Activated B cell treated with CpG ODN at 0.5 μM for 24 hours (primary cell): ENCODE measurements at regions of chr1 and their contacts with region 1.

Region 1: DNA sequence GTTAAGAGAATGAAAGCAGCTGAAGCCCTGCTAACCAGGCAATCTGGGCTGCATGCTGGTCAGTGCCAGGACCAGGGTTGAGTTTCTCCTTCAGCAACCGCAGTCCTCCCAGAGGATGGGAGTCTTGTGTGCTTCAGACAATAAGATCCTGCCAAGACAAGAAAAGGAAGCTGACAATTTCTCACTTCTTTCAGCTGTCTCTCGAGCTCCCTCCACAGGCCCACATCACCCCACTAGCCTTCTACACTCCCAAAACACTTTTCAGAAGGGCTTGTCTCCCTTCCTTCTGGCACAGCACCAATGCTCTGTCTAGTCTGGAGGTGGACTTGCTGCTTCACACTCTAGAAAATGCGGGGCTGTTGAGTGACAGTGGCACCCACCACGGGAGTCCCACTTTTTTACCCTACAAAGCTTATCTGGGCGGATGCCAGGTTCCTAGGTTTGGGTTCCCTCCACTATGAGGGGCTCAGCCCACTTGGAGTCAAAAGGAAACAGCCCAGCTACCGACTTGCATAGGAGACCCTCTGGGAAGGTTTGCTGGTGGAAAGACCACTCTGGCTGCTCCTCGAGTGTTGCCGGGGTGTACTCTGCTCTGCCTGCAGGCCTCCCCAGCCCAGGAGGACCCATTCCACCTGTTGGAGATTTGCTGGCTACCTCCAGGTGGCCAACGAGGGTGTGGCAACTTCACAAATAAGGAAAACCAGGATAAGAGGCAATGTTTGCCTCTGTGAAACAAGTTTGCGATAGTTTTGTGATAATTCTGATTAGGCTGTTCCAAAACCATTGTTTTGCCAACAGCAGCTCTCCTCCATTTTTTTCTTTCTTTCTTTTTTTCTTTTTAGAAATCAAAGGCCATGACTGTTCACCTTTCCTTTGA is 68.9 kb downstream of the TENT5C start:
- DNase-seq: peak; percentile 41
- ATAC-seq: peak; percentile 80
- H3K4me3 Mint-ChIP-seq: no peak overlapping the region
- H3K27ac Mint-ChIP-seq: no peak overlapping the region
- H3K4me1 Mint-ChIP-seq: peaks cover 56% of the 10 kb centered on the region
- H3K27me3 Mint-ChIP-seq: no peaks in the 10 kb centered on the region
- CTCF ChIP-seq: no peak

Region 2: GRCh38 chr1:117599286-117600221 is 75.2 kb before region 1 on chr1:
- CTCF ChIA-PET with region 1: interaction called, 11 read pairs
- POLR2A ChIA-PET with region 1: interaction called, 1,269 read pairs
- intact Hi-C with region 1: no loop called
- DNase-seq: peak; percentile 4
- ATAC-seq: no peak
- H3K4me3 Mint-ChIP-seq: no peak overlapping the region
- H3K27ac Mint-ChIP-seq: no peak overlapping the region
- H3K4me1 Mint-ChIP-seq: peaks cover 25% of the 10 kb centered on the region
- H3K27me3 Mint-ChIP-seq: no peaks in the 10 kb centered on the region
- CTCF ChIP-seq: no peak

Region 3: GRCh38 chr1:117622726-117623125 is 52.0 kb before region 1 on chr1:
- CTCF ChIA-PET with region 1: interaction called, 11 read pairs
- POLR2A ChIA-PET with region 1: interaction called, 1,269 read pairs
- intact Hi-C with region 1: no loop called
- DNase-seq: no peak
- ATAC-seq: peak; percentile 29
- H3K4me3 Mint-ChIP-seq: no peak overlapping the region
- H3K27ac Mint-ChIP-seq: peak overlapping the region; percentile 71
- H3K4me1 Mint-ChIP-seq: peaks cover 95% of the 10 kb centered on the region
- H3K27me3 Mint-ChIP-seq: no peaks in the 10 kb centered on the region
- CTCF ChIP-seq: no peak

Region 4: GRCh38 chr1:117654493-117655219 is 20.1 kb before region 1 on chr1:
- CTCF ChIA-PET with region 1: interaction called, 25 read pairs
- POLR2A ChIA-PET with region 1: interaction called, 32 read pairs
- intact Hi-C with region 1: loop called (anchors 1 kb)
- DNase-seq: peak; percentile 35
- ATAC-seq: peak; percentile 67
- H3K4me3 Mint-ChIP-seq: peak overlapping the region; percentile 49
- H3K27ac Mint-ChIP-seq: peak overlapping the region; percentile 93
- H3K4me1 Mint-ChIP-seq: peaks cover 92% of the 10 kb centered on the region
- H3K27me3 Mint-ChIP-seq: no peaks in the 10 kb centered on the region
- CTCF ChIP-seq: no peak

Region 5: DNA sequence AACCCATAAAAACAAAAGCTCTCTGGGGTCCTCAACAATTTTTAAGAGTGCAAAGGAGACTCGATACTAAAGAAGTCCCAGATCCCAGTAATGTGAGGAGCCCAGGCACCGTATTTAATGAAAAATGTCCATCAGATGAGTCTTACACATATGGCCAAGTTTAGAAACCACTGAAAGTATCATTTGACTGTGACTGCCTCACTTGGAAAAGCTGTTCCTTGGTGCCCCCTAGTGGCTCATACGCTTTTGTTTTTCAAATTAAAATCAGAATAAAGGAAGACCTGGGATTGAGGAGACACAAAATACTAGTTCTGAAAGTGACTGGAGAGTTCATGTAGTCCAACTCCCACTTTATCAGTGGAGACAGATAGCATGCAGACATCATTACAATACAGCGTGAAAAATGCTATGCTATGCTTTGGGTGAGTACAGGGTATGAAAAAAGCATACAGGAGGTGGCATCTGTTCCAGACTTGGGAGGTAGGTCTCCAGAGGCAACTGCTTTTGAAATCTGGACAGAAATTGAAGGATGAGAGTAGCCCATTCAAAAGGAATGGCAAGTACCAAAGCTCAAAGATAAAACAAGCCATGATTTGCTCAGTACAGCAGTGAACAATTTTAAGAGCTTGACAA is 220.8 kb after region 1 on chr1:
- CTCF ChIA-PET with region 1: interaction called, 6 read pairs
- POLR2A ChIA-PET with region 1: no interaction called
- intact Hi-C with region 1: loop called (anchors 10 kb)
- DNase-seq: no peak
- ATAC-seq: peak; percentile 68
- H3K4me3 Mint-ChIP-seq: no peak overlapping the region
- H3K27ac Mint-ChIP-seq: no peak overlapping the region
- H3K4me1 Mint-ChIP-seq: no peaks in the 10 kb centered on the region
- H3K27me3 Mint-ChIP-seq: no peaks in the 10 kb centered on the region
- CTCF ChIP-seq: peak; percentile 34